Activated B cell treated with CpG ODN at 0.5 μM for 24 hours (primary cell): ENCODE measurements at regions of chr7 and their contacts with region 1.

Region 1: DNA sequence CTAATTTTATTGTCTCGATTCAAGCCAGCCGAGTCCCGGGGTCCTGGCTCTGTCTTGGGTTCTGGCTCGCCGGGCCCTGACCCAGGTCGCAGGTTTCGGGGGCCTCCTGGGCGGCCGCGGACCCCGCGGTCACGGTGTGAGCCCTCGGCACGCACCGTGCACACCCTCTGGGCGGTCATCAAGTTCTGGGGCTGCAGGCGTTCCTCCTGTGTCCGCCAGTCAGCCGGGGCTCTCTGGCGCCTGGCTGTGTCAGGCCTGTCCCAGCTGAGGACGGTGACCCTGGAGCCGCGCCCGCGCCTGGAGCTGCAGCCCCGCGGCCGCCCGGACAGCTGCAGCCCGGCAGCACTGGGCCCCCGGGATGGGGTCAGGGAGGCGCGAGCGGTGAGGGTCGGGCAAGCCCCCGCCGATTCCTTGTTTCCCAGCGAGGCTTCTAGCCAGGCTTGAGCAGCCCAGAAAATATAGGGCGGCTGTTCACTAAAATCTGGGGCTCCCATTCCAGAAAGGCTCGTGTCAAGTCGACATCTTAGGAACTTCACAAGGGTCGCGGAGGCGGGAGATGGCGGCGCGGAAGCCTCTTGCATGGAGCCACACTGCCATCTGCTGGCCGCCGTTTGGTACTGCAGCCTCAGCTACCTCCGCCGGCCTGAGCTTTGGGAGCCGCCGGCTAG is 4.2 kb upstream of the HOXA7 start:
- DNase-seq: peak; percentile 83
- ATAC-seq: peak; percentile 87
- H3K4me3 Mint-ChIP-seq: peak overlapping the region; percentile 75
- H3K27ac Mint-ChIP-seq: no peak overlapping the region
- H3K4me1 Mint-ChIP-seq: peaks cover 31% of the 10 kb centered on the region
- H3K27me3 Mint-ChIP-seq: peaks cover 72% of the 10 kb centered on the region
- CTCF ChIP-seq: peak; percentile 97

Region 2: DNA sequence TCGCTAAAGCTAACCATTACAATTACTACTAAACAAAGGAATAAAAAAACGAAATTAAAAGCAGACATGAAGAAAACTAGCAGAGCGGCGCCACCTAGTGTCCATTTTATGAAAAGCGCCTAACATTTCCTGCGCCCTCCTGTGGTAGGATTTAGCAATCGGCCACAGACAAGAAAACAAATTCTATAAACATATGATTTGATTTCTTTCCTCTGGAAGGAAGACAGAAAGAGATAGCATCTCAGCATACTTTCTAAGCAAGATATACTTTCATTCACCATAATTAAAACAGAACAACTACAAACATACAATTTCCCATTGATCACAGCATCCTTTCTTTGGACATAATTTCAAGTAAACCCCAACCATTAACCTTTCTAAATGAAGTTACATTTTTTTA is 1594.7 kb before region 1 on chr7:
- CTCF ChIA-PET with region 1: no interaction called
- POLR2A ChIA-PET with region 1: no interaction called
- intact Hi-C with region 1: loop called (anchors 2 kb)
- DNase-seq: peak; percentile 37
- ATAC-seq: peak; percentile 50
- H3K4me3 Mint-ChIP-seq: no peak overlapping the region
- H3K27ac Mint-ChIP-seq: no peak overlapping the region
- H3K4me1 Mint-ChIP-seq: peaks cover 2% of the 10 kb centered on the region
- H3K27me3 Mint-ChIP-seq: peaks cover 14% of the 10 kb centered on the region
- CTCF ChIP-seq: peak; percentile 100

Region 3: GRCh38 chr7:26151953-26152781 is 1008.5 kb before region 1 on chr7 and contains the start of gene NFE2L3:
- CTCF ChIA-PET with region 1: no interaction called
- POLR2A ChIA-PET with region 1: no interaction called
- intact Hi-C with region 1: loop called (anchors 5 kb)
- DNase-seq: peak; percentile 82
- ATAC-seq: peak; percentile 90
- H3K4me3 Mint-ChIP-seq: peak within 1 kb of the TSS; percentile 94
- H3K27ac Mint-ChIP-seq: peak within 1 kb of the TSS; percentile 86
- H3K4me1 Mint-ChIP-seq: peaks cover 48% of the 10 kb centered on the region
- H3K27me3 Mint-ChIP-seq: no peaks in the 10 kb centered on the region
- CTCF ChIP-seq: no peak
- total RNA-seq, gene NFE2L3: 2.7 and 3.0 TPM in 2 replicates

Region 4: DNA sequence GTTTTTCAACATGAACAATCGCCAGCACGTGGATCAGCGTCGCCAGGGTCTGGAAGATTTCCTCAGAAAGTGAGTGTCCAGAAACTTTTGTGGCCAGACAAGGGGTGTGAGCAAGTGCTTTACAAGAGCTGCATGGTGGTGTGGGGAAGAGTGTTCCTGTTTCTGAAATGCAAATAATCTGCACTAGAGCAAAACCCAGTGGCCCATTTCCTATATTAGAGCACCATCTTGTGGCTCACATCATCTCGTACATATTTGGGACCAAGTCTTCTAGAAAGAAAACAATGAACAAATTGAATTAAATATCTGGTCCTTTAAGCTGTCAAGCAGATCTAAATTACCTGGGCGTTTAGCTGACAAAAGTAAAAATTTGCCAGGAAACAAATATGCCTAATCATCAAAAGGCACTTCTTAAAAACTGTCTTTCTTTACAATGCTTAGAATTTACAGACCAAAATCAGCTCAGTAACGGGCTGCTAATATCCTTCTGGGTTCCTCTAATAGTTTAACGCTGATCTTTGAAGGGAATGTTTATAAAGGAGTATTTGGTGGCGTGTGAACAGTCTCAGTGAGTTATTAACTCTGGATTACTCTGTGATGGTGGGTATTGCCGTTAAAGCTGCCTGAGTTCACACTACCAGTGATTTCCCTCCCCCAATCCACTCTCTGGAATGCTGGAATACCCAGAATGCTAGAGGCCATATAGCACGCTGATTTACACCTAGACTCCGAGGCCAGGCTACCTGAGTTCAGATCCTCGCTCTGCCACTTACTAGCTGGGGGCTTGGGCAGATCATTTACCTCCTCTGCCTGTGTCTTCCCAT is 795.4 kb before region 1 on chr7:
- CTCF ChIA-PET with region 1: interaction called, 94 read pairs
- POLR2A ChIA-PET with region 1: interaction called, 4 read pairs
- intact Hi-C with region 1: loop called (anchors 1 kb)
- DNase-seq: no peak
- ATAC-seq: peak; percentile 89
- H3K4me3 Mint-ChIP-seq: no peak overlapping the region
- H3K27ac Mint-ChIP-seq: peak overlapping the region; percentile 85
- H3K4me1 Mint-ChIP-seq: peaks cover 46% of the 10 kb centered on the region
- H3K27me3 Mint-ChIP-seq: no peaks in the 10 kb centered on the region
- CTCF ChIP-seq: peak; percentile 52

Region 5: GRCh38 chr7:26686448-26686981 is 474.2 kb before region 1 on chr7:
- CTCF ChIA-PET with region 1: interaction called, 6 read pairs
- POLR2A ChIA-PET with region 1: interaction called, 6 read pairs
- intact Hi-C with region 1: loop called (anchors 1 kb)
- DNase-seq: no peak
- ATAC-seq: no peak
- H3K4me3 Mint-ChIP-seq: no peak overlapping the region
- H3K27ac Mint-ChIP-seq: no peak overlapping the region
- H3K4me1 Mint-ChIP-seq: peaks cover 28% of the 10 kb centered on the region
- H3K27me3 Mint-ChIP-seq: no peaks in the 10 kb centered on the region
- CTCF ChIP-seq: peak; percentile 61

Region 6: GRCh38 chr7:27196287-27196767 is 35.6 kb after region 1 on chr7:
- CTCF ChIA-PET with region 1: interaction called, 5 read pairs
- POLR2A ChIA-PET with region 1: interaction called, 3 read pairs
- intact Hi-C with region 1: loop called (anchors 2 kb)
- DNase-seq: no peak
- ATAC-seq: no peak
- H3K4me3 Mint-ChIP-seq: no peak overlapping the region
- H3K27ac Mint-ChIP-seq: no peak overlapping the region
- H3K4me1 Mint-ChIP-seq: peaks cover 30% of the 10 kb centered on the region
- H3K27me3 Mint-ChIP-seq: peaks cover 65% of the 10 kb centered on the region
- CTCF ChIP-seq: no peak